ENCODE measurements at regions of chrX and their contacts with region 1.

Region 1: DNA sequence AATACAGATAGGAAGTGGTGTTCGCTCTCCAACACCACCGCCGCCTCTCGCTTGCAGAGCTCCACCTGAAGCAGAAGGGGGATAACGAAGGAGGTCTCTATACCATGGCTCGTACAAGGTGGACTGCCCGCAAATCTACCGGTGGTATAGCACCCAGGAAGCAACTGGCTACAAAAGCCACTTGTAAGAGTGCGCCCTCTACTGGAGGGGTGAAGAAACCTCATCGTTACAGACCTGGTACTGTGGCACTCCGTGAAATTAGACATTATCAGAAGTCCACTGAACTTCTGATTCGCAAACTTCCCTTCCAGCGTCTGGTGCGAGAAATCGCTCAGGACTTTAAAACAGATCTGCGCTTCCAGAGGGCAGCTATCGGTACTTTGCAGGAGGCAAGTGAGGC is 5.2 kb upstream of the BMP15 start:
- DNase-seq: no peak
- H3K4me3 ChIP-seq: no peak overlapping the region
- H3K27ac ChIP-seq: no peak overlapping the region
- H3K4me1 ChIP-seq: no peaks in the 10 kb centered on the region
- H3K27me3 ChIP-seq: no peaks in the 10 kb centered on the region
- CTCF ChIP-seq: peak; percentile 16

Region 2: GRCh38 chrX:50751091-50751490 is 154.2 kb before region 1 on chrX:
- intact Hi-C with region 1: loop called (anchors 5 kb)
- DNase-seq: no peak
- H3K4me3 ChIP-seq: no peak overlapping the region
- H3K27ac ChIP-seq: no peak overlapping the region
- H3K4me1 ChIP-seq: no peaks in the 10 kb centered on the region
- H3K27me3 ChIP-seq: no peaks in the 10 kb centered on the region
- CTCF ChIP-seq: no peak

Region 3: DNA sequence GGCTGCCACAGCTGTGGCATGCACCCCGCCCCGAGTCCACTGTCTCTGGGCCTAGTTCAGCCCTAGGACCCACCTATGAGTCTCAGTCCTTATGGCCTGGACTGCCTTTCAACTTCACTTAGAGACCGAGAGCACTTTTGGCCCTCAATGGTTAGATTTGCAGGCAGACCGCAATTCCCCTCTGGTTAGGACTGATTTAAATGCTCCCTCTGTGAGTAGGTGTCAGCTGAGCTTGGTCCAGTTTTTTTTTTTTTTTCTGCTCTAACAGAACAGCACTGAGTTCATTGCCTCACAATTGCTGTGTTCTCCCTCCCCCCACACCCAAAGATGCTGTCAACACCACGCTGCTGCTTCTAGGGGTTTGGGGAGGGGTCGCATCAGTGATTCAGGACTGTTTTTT is 148.4 kb after region 1 on chrX:
- intact Hi-C with region 1: no loop called
- DNase-seq: no peak
- H3K4me3 ChIP-seq: no peak overlapping the region
- H3K27ac ChIP-seq: no peak overlapping the region
- H3K4me1 ChIP-seq: no peaks in the 10 kb centered on the region
- H3K27me3 ChIP-seq: no peaks in the 10 kb centered on the region
- CTCF ChIP-seq: no peak